ENCODE measurements at regions of chr19 and their contacts with region 1.

Region 1: GRCh38 chr19:34501339-34502320 is 20.1 kb downstream of the WTIP start:
- ATAC-seq: peak; percentile 75 to 95 (median 92)
- H3K4me3 ChIP-seq: no peak overlapping the region
- H3K27ac ChIP-seq: no peak overlapping the region
- H3K4me1 ChIP-seq: no peaks in the 10 kb centered on the region

Region 2: GRCh38 chr19:34712395-34713261 is 211.0 kb after region 1 on chr19:
- in situ Hi-C with region 1: loop called in 1 of 9 experiments (anchors 25 kb)
- ATAC-seq: peak in 7 of 8 experiments; percentile 27 to 97 (median 67)
- H3K4me3 ChIP-seq: no peak overlapping the region
- H3K27ac ChIP-seq: no peak overlapping the region
- H3K4me1 ChIP-seq: no peaks in the 10 kb centered on the region